Activated CD4-positive, alpha-beta memory T cell treated with anti-CD3 and anti-CD28 coated beads for 36 hours (primary cell): ENCODE measurements at regions of chr5 and their contacts with region 1.

Region 1: DNA sequence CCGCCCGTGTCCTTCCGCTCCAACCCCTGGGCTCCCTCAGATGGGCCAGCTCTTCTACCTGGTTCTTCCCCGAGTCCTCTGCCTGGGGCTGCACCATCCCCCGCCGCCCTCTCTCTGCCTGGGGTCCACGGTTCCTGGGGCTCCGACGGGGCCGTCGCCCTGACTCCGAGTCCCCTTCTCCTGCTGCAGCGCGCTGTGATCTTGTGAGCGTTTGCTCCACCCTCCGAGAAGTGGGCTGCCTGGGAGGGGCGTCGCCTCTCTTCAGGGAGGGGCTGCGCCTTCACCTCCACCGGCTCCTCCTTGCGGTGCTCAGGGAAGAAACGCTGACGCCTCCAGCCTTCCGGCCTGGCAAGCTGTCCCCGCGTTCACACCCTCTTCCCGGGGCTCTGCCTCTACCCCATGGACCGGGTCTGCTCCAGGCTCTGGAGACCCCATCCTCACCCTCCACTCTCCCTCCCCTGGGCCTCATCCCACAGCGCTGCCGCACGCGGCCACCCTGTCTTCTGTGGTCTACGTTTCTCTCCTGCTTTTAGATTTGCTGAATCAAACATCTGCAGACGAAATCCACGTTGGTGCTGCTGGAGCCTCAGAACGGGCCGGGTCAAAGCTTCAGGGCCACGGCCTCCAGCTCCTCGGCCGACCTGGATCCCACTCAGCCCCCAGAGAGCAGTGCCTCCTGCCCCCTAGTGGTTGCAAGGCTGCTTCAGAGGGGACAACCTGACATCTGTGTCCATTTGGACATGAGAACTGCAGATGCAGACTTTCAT is 22.7 kb upstream of the SLC6A3 start:
- DNase-seq: peak; percentile 24
- H3K4me3 Mint-ChIP-seq: no peak overlapping the region
- H3K27ac Mint-ChIP-seq: no peak overlapping the region
- H3K4me1 Mint-ChIP-seq: no peaks in the 10 kb centered on the region
- H3K27me3 Mint-ChIP-seq: no peaks in the 10 kb centered on the region

Region 2: DNA sequence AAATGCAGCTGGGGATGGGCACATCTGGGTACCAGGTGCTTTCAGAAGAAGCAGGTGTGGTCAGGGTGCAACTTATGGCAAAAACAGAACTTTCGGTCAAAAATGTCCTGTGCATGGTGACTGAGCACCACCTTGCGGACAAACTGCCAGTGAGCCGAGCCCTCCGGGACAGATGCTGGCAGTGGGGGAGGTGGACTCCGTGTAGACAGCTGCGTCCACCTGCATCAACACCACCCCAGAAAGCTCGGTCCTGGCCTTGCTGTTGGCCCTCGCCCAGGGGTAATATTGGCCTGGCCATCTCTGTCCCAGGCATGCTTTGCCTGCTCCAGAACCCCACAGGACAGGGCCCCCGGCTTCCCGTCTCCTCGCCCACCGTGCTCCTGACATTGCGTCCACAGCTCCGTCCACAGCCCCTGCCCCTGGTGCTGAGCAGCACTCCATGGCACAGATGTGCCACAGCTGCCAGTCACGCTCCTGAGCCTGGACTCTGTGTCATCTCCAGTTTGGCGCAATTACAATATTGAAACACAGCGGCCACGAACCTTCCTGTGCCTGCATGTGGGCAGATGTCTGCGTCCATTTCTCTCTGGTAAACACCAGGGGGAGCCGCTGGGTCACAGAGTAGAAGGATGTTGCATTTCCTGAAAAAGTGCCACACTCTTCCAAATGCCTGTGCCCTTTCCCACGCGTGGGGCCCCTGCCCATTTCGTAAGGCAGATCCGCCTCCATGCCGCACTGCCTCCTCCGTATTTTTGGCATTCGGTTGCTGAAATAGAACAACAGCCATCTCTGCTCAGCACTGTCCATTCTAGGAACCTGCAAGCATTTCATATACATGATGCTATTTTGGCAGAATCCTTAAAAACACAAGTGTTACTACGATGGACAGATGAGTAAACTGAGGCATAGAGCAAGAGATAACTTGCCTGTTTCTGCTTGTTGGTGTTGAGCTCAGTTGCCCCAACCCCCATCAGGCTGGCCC is 299.9 kb before region 1 on chr5:
- CTCF ChIA-PET with region 1: interaction called, 3 read pairs
- POLR2A ChIA-PET with region 1: no interaction called
- intact Hi-C with region 1: loop called (anchors 5 kb)
- DNase-seq: peak; percentile 69
- H3K4me3 Mint-ChIP-seq: no peak overlapping the region
- H3K27ac Mint-ChIP-seq: no peak overlapping the region
- H3K4me1 Mint-ChIP-seq: peaks cover 8% of the 10 kb centered on the region
- H3K27me3 Mint-ChIP-seq: peaks cover 11% of the 10 kb centered on the region